ENCODE measurements at regions of chr1 and their contacts with region 1.

Region 1: DNA sequence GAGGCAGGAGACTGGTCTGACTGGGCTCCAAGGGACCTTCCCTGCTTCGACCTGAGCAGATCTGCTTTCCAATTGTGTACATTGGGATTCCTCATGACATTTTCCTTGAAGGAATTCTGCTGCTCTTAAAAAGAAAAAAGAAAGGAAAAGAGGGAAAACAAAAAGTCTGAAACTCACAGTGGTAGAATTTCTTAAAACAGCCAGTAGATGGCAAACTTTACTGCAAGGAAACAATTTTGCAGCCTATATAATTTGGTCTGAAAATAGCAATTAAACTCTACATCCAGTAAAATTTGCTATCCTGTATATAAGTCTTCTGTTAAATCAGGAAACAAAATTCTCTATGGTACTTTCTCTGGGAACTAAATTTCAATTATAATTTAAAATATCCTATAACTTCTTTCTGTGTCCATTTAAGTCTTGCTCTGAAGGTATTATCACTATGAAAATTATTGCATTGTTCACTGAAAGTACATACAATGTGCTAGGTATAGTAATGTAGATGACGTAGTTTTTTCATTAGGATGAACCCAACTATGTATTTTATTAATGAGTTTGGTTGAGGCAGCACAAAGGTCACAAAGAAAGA is 59.8 kb downstream of the CRB1 start:
- DNase-seq: peak; percentile 33
- H3K4me3 Mint-ChIP-seq: no peak overlapping the region
- H3K27ac Mint-ChIP-seq: no peak overlapping the region
- H3K4me1 Mint-ChIP-seq: no peaks in the 10 kb centered on the region
- H3K27me3 Mint-ChIP-seq: no peaks in the 10 kb centered on the region
- CTCF ChIP-seq: peak; percentile 43

Region 2: GRCh38 chr1:197343663-197344273 is 15.9 kb after region 1 on chr1:
- CTCF ChIA-PET with region 1: interaction called, 16 read pairs
- POLR2A ChIA-PET with region 1: no interaction called
- intact Hi-C with region 1: no loop called
- DNase-seq: no peak
- H3K4me3 Mint-ChIP-seq: no peak overlapping the region
- H3K27ac Mint-ChIP-seq: no peak overlapping the region
- H3K4me1 Mint-ChIP-seq: no peaks in the 10 kb centered on the region
- H3K27me3 Mint-ChIP-seq: no peaks in the 10 kb centered on the region
- CTCF ChIP-seq: no peak

Region 3: GRCh38 chr1:197924516-197925123 is 596.8 kb after region 1 on chr1:
- CTCF ChIA-PET with region 1: no interaction called
- POLR2A ChIA-PET with region 1: no interaction called
- intact Hi-C with region 1: loop called (anchors 5 kb)
- DNase-seq: peak; percentile 84
- H3K4me3 Mint-ChIP-seq: no peak overlapping the region
- H3K27ac Mint-ChIP-seq: no peak overlapping the region
- H3K4me1 Mint-ChIP-seq: peaks cover 5% of the 10 kb centered on the region
- H3K27me3 Mint-ChIP-seq: no peaks in the 10 kb centered on the region
- CTCF ChIP-seq: peak; percentile 84

Region 4: DNA sequence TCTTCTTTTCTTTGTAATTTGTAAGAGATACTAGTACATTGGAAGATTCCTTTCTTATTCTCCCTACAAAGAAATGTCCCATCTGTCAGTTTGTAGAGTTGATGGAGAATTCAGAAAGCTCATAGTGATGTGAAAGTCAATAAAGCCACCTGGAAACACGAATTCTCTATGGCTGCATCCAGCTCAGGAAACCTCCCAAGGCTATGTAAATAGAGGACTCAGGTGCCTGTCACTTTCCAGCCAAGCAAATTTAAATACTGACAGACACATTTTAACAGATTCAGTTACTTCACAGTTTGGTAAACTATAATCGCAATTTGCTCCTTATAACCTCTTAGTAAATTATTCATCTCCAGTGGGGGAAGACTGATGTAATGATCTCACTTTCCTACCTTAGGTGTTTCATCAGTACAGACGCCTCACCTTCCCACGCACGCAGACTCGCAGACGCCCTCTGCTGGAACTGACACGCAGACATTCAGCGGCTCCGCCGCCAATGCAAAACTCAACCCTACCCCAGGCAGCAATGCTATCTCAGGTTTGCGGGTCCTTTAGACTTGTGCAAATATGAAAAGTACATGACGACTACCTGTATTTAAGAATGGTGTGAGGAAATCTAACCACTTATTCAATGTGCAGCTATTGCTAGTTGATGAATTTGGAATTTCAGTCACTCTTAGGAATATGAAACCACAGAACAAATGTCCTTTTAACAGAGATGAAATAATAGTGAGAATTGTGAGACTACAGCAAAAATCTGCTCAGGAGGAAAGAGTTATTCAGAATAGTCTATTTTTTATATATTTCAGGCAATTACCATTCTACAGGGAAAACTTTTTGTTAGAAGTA is 1371.5 kb after region 1 on chr1:
- CTCF ChIA-PET with region 1: no interaction called
- POLR2A ChIA-PET with region 1: no interaction called
- intact Hi-C with region 1: loop called (anchors 5 kb)
- DNase-seq: peak; percentile 81
- H3K4me3 Mint-ChIP-seq: no peak overlapping the region
- H3K27ac Mint-ChIP-seq: no peak overlapping the region
- H3K4me1 Mint-ChIP-seq: peaks cover 10% of the 10 kb centered on the region
- H3K27me3 Mint-ChIP-seq: no peaks in the 10 kb centered on the region
- CTCF ChIP-seq: peak; percentile 96

Measured in MCF 10A (cell line).